ENCODE measurements at regions of chr11 and their contacts with region 1.

Region 1: GRCh38 chr11:77994412-77995362 is at the start of gene INTS4:
- DNase-seq: peak; percentile 99
- H3K4me3 Mint-ChIP-seq: peak within 1 kb of the TSS; percentile 86
- H3K27ac Mint-ChIP-seq: peak within 1 kb of the TSS; percentile 81
- H3K4me1 Mint-ChIP-seq: peaks cover 11% of the 10 kb centered on the region
- H3K27me3 Mint-ChIP-seq: no peaks in the 10 kb centered on the region
- CTCF ChIP-seq: no peak
- total RNA-seq, gene INTS4: 21.6 and 25.2 TPM in 2 replicates

Region 2: GRCh38 chr11:77820563-77821348 is 173.9 kb before region 1 on chr11 and contains the starts of genes AAMDC and RSF1:
- CTCF ChIA-PET with region 1: interaction called, 5 read pairs
- POLR2A ChIA-PET with region 1: interaction called, 23 read pairs
- intact Hi-C with region 1: loop called (anchors 1 kb)
- DNase-seq: peak; percentile 99
- H3K4me3 Mint-ChIP-seq: peak within 1 kb of the TSS; percentile 93
- H3K27ac Mint-ChIP-seq: peak within 1 kb of the TSS; percentile 90
- H3K4me1 Mint-ChIP-seq: peaks cover 7% of the 10 kb centered on the region
- H3K27me3 Mint-ChIP-seq: no peaks in the 10 kb centered on the region
- CTCF ChIP-seq: peak; percentile 72
- total RNA-seq, gene AAMDC: 13.0 and 13.2 TPM in 2 replicates
- total RNA-seq, gene RSF1: 62.0 and 71.2 TPM in 2 replicates

Region 3: DNA sequence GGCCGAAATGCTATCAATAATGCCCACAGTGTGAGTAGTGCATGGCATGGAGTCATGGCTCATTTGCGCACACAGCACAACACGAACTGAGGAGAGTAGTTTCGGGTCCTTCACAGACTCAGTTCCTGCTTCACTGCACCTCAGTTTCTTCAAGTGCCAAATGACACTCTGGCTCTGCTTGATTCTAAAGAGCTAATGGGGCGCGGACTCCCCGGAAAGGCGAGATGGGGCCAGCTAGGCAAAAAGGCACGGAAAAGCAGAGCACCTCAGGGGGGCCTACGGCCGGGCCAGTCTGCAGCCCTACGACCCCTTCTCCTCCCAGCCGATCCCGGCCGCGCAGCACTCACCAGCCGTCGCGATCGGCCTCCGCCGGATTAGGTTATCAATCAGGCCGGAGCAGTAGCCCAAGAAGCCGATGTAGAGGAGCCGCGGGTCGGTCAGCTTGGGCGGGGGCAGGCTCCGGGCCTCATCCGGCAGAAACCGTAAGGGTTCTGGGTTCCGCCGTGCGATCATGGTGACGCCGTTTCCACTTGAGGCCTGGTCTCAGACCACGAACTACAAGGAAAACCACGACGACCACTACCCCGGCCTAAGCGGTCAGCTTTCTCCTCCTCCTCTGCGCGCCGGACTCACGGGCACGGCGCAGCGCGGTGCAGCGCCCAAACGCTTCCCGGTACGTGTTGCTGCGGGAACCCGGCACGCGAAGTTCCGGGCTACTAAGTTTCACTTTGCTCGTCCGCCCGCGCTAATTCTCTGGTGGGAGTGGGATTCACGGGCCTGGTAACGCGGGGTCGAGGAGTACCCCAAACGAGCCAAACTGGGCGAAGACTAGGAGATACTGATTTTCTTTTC is 84.8 kb after region 1 on chr11 and contains the start of gene NDUFC2:
- CTCF ChIA-PET with region 1: interaction called, 3 read pairs
- POLR2A ChIA-PET with region 1: interaction called, 28 read pairs
- intact Hi-C with region 1: no loop called
- DNase-seq: peak; percentile 72
- H3K4me3 Mint-ChIP-seq: peak within 1 kb of the TSS; percentile 83
- H3K27ac Mint-ChIP-seq: peak within 1 kb of the TSS; percentile 65
- H3K4me1 Mint-ChIP-seq: peaks cover 37% of the 10 kb centered on the region
- H3K27me3 Mint-ChIP-seq: no peaks in the 10 kb centered on the region
- CTCF ChIP-seq: no peak
- total RNA-seq, gene NDUFC2: 156 and 186 TPM in 2 replicates

Region 4: DNA sequence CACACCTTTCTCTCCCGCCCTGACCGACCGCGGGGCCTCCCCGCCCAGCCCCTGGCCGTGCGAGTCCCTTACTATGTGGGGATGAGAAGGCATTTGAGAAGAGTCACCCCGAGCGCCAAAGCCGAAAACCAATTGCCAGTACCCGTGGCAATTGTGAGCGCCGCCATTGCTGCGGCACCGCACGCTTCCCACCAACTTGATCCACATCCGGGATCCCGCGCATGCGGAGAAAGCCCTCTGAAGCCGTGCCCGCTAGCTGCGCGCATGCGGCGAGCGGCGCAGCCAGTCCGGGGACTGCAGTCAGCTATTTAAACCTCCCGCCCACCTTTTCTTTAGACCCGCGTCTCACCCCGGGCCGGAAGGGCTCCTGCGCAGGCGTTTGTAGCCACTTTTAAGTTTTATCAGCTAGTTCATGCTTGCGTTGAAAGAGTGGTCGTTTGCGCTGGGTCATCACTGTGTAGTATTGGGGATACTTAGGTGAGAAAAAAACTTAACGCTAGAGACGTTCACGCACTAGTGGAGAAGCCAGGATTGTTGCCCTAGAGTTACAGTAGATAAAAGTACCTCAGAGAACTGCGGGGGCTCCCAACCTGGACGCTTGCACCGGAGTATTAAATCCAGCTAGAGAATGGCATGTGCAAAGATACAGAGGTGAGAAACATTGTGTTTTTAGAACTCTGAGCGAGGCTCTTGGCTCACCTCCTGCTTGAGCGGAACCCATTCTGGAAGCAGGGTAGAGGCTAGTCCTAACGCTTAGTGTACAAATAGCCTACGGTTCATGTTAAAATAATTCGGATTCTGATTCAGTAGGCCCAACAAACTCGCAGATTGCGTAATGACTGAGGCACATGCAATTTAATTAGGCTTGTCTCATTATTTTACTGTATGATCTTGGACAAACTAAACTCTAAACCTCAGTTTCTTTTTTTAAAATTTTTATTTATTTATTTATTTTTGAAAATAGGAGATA is 145.0 kb after region 1 on chr11 and contains the start of gene ALG8:
- CTCF ChIA-PET with region 1: no interaction called
- POLR2A ChIA-PET with region 1: interaction called, 10 read pairs
- intact Hi-C with region 1: no loop called
- DNase-seq: peak; percentile 93
- H3K4me3 Mint-ChIP-seq: peak within 1 kb of the TSS; percentile 93
- H3K27ac Mint-ChIP-seq: peak within 1 kb of the TSS; percentile 89
- H3K4me1 Mint-ChIP-seq: peaks cover 17% of the 10 kb centered on the region
- H3K27me3 Mint-ChIP-seq: no peaks in the 10 kb centered on the region
- CTCF ChIP-seq: no peak
- total RNA-seq, gene ALG8: 33.8 and 37.2 TPM in 2 replicates

Measured in MCF 10A (cell line).